ENCODE measurements at regions of chr12 and their contacts with region 1.

Region 1: DNA sequence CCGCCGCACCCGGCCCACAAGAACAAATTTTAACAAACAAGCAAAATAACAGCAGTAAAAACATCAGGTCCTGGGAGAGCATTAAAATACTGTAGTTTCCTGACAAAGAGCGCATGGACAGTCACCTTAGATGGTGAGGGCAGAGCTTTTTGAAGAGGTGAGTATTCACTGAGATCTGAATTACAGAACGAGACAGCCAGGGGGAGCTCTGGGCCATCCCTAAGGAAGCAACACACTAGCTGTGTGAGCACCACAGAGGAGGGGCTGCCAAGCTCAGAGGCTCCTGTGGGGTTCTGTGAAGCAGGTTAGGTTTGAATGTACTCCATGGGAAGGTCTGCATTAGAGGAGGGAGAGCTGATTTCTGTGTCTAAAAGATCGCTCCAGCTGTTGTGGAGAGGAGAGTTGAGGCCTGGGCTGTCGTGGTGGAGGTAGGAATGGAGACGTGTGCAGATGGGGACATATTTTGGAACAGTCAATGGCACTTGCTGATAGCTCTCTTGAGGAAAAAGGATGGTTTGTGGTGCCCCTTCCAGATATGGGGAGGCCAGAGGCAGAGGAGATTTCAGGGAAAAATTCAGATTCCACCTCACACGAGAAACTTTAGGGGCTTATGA is 72.9 kb downstream of the TRAFD1 start:
- DNase-seq: no peak
- ATAC-seq: peak; percentile 69

Region 2: DNA sequence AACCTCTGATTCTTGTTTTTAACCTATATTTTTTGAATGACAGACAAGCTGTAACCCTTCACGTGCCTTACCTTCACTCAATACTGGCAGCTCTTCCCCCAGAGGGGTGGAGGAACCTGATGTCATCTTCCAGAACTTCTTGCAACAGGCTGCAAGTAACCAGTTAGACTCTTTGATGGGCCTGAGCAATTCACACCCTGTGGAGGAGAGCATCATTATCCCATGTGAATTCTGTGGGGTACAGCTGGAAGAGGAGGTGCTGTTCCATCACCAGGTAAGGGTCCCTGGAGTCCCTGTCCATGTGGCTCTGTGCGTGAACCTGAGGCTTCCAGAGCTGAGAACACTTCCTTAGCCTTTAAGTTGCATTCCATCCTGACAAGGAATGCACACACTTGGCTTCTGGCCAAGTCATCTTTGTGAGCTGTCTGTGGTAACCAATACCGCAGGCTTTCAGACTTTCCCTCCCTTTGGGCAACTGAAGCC is 50.2 kb before region 1 on chr12:
- intact Hi-C with region 1: no loop called
- DNase-seq: no peak
- ATAC-seq: no peak

Region 3: GRCh38 chr12:112261559-112261958 is 63.3 kb after region 1 on chr12:
- intact Hi-C with region 1: loop called (anchors 2 kb)
- DNase-seq: no peak
- ATAC-seq: no peak

Region 4: DNA sequence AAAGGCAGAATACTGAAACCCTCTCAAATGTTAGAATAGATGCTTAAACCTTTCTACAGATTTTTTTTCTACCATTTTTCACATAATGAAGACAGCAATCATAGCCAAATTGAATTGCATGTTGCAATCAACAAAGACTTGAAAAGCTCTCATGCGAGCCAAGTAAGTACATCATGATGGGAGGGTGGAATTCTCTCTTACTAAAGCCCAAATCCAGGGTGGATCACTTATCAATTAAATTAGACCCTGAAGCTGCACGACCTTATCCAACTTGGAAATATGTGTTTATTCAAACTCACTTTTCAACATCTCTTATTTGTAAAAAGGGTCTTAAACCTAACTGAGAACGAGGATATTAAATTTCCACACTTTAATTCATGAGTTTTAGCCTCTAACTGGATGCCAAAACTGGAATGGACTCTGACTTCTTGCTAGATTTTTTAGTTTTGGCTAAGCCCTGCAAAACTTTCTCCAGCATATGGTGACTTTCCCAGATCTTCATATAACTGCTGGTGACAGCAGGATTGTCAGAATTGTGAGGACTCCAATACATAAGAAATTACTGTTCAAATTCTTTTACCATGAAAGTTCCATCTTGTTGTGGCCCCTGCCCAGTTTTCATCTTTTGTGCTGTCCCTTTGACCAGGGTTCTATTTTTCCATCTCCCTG is 130.4 kb after region 1 on chr12:
- intact Hi-C with region 1: no loop called
- DNase-seq: no peak
- ATAC-seq: peak; percentile 31